H1 (cell line): ENCODE measurements at regions of chr2 and their contacts with region 1.

Region 1: DNA sequence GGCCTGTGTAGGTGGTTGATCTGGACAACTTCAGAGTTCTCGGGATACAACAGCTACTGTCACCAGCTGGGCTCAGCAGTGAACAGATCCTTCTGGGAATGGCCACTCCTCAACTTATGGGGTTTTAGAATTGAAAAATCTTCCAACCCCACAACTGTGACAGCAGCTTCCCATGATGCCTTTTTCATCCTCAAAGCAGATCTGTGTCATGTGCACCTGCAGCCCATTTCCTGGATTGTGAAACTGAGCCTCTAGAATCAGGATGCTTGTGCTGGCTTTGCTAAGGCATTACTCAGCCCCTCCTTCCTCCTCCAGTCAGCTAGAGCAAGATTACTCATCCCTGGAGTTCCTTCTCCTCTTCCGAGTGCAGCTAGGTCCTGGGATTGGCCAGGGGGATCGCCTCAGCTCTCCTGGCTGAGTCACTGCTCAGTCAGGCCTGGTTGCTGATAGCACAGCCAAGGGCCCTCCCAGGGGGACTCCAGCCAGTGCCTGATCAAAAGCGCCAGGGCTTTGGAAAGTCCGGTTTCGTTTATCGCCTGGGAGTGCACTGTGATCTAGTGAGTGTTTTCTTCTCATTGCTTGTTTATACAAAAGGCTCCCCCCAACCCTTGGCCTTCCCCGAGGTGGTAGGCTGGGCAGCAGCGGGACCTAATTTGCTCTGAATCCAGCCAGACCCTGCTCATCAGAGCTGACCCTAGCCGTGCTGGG is 2.4 kb upstream of the LPIN1 start:
- DNase-seq: peak; percentile 64 to 81
- H3K4me3 ChIP-seq: no peak overlapping the region
- H3K27ac ChIP-seq: no peak overlapping the region
- H3K4me1 ChIP-seq: peaks cover 6 to 33% (median 22%) of the 10 kb centered on the region in 4 experiments
- H3K27me3 ChIP-seq: peaks cover 0 to 5% (median 0%) of the 10 kb centered on the region in 4 experiments; a peak in 2 of 7 replicates
- CTCF ChIP-seq: no peak
- EP300 ChIP-seq: 0 out of 3 replicates have a peak, but pooled peaks of 1 of the 2 experiments have one; percentile 6
- POLR2A ChIP-seq: no peak
- RAD21 ChIP-seq: 0 out of 4 replicates have a peak, but pooled peaks of 1 of the 2 experiments have one; percentile 3

Region 2: DNA sequence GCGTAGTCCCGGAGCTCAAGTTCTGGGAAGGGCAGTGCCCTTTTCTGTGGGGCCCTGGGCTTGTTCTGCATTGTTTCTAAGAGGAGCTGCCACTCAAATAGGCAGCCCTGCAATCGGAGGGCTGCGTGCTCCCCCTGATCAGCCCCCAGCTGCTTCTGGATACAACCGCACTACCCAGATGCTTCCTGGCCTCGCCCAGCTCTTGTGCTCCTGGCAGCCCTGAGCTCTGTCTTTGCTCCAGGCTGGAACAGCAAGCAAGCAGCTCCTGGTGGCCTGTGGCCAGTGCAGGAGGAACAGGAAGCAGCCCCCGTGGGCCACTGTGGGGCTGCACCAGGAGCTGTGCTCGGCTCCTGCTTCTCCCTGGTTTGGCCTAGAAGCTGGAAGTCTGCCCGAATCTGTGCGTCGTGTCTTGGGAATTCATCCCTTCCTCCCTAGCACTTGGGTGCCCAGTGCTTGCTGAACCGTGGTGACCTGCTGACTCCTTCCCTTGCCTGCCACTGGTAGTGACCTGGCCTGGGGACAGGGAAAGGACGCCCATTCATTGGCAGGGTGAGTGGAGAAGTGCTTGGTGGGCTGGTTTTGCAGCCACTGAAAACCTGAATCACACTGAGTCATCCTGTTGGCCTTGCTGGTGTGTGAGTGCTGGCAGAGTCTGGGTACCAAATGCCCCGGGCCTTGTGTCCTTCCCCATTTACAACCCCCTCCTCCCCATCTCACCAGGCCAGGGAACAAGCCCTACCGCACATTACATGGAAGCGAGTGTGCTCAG is 46.7 kb before region 1 on chr2:
- CTCF ChIA-PET with region 1: interaction called, 16 read pairs
- POLR2A ChIA-PET with region 1: interaction called, 4 read pairs
- DNase-seq: no peak
- H3K4me3 ChIP-seq: no peak overlapping the region
- H3K27ac ChIP-seq: no peak overlapping the region
- H3K4me1 ChIP-seq: no peaks in the 10 kb centered on the region
- H3K27me3 ChIP-seq: no peaks in the 10 kb centered on the region
- CTCF ChIP-seq: no peak
- EP300 ChIP-seq: no peak
- POLR2A ChIP-seq: no peak
- RAD21 ChIP-seq: no peak

Region 3: GRCh38 chr2:11703700-11704099 is 40.3 kb before region 1 on chr2:
- CTCF ChIA-PET with region 1: interaction called, 16 read pairs
- POLR2A ChIA-PET with region 1: no interaction called
- DNase-seq: no peak
- H3K4me3 ChIP-seq: no peak overlapping the region
- H3K27ac ChIP-seq: no peak overlapping the region
- H3K4me1 ChIP-seq: no peaks in the 10 kb centered on the region
- H3K27me3 ChIP-seq: no peaks in the 10 kb centered on the region
- CTCF ChIP-seq: no peak
- EP300 ChIP-seq: no peak
- POLR2A ChIP-seq: no peak
- RAD21 ChIP-seq: no peak

Region 4: GRCh38 chr2:11726384-11726783 is 17.6 kb before region 1 on chr2:
- CTCF ChIA-PET with region 1: interaction called, 19 read pairs
- POLR2A ChIA-PET with region 1: interaction called, 3 read pairs
- DNase-seq: no peak
- H3K4me3 ChIP-seq: no peak overlapping the region
- H3K27ac ChIP-seq: no peak overlapping the region
- H3K4me1 ChIP-seq: peaks cover 0 to 3% (median 0%) of the 10 kb centered on the region in 4 experiments; a peak in 3 of 7 replicates
- H3K27me3 ChIP-seq: no peaks in the 10 kb centered on the region
- CTCF ChIP-seq: no peak
- EP300 ChIP-seq: no peak
- POLR2A ChIP-seq: no peak
- RAD21 ChIP-seq: no peak

Region 5: GRCh38 chr2:11732587-11732986 is 11.4 kb before region 1 on chr2:
- CTCF ChIA-PET with region 1: interaction called, 29 read pairs
- POLR2A ChIA-PET with region 1: interaction called, 6 read pairs
- DNase-seq: no peak
- H3K4me3 ChIP-seq: no peak overlapping the region
- H3K27ac ChIP-seq: no peak overlapping the region
- H3K4me1 ChIP-seq: no peaks in the 10 kb centered on the region; a peak in 1 of 7 replicates
- H3K27me3 ChIP-seq: no peaks in the 10 kb centered on the region
- CTCF ChIP-seq: no peak
- EP300 ChIP-seq: no peak
- POLR2A ChIP-seq: no peak
- RAD21 ChIP-seq: no peak

Region 6: DNA sequence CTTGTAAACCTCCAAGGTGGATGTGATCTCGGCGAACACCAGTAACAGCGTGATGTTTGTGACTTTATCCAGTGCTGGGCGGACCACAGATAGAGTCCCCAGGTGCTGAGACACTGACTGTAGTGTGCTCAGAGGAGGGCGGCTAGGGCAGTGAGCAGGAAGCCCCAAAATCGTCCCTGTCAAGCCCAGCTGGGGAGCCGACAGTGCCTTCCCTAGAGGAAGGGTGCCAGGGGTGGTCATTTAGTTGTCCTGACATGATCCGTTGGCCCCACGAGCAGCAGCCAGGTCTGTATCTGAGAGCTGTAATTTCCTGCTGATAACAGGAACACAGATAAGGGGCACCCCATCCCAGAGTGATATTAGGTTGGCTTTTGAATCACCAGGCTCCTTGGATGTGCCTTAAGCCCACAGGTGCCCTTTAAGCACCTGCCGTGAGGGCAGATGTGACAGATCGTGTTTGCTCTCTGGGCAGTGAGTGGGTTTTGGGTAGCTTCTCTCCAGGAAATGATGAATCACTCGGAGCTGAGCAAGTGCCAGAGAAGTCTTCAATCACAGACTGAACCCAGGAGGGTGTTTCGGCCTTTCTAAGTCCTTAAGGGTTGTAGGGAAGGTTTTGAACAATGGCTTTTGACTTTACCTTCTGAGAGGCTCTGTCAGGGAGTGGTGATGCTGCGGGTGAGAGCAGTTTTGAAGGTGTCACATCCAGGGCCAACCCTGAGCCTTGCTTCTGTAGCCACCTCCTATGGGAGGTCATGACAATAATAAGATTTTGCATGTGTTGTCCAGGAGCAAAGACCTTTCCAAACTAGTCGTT is 10.1 kb after region 1 on chr2:
- CTCF ChIA-PET with region 1: interaction called, 18 read pairs
- POLR2A ChIA-PET with region 1: interaction called, 6 read pairs
- DNase-seq: no peak
- H3K4me3 ChIP-seq: no peak overlapping the region
- H3K27ac ChIP-seq: no peak overlapping the region
- H3K4me1 ChIP-seq: peaks cover 0 to 14% (median under 1%) of the 10 kb centered on the region in 4 experiments; a peak in 4 of 7 replicates
- H3K27me3 ChIP-seq: no peaks in the 10 kb centered on the region
- CTCF ChIP-seq: no peak
- EP300 ChIP-seq: no peak
- POLR2A ChIP-seq: no peak
- RAD21 ChIP-seq: no peak

Region 7: GRCh38 chr2:11778923-11779757 is 35.1 kb after region 1 on chr2:
- CTCF ChIA-PET with region 1: interaction called, 217 read pairs
- POLR2A ChIA-PET with region 1: no interaction called
- DNase-seq: peak; percentile 19 to 95
- H3K4me3 ChIP-seq: no peak overlapping the region
- H3K27ac ChIP-seq: no peak overlapping the region
- H3K4me1 ChIP-seq: peaks cover 0 to 3% (median 1%) of the 10 kb centered on the region in 4 experiments; a peak in 3 of 7 replicates
- H3K27me3 ChIP-seq: no peaks in the 10 kb centered on the region; a peak in 1 of 7 replicates
- CTCF ChIP-seq: peak; percentile 81 to 95 (median 89)
- EP300 ChIP-seq: no peak
- POLR2A ChIP-seq: no peak
- RAD21 ChIP-seq: peak; percentile 92 to 93